ENCODE measurements at regions of chr15 and their contacts with region 1.

Region 1: GRCh38 chr15:39959411-39959810 is 25.5 kb downstream of the EIF2AK4 start:
- DNase-seq: no peak
- H3K4me3 ChIP-seq: no peak overlapping the region
- H3K27ac ChIP-seq: no peak overlapping the region
- H3K4me1 ChIP-seq: no peaks in the 10 kb centered on the region
- H3K27me3 ChIP-seq: no peaks in the 10 kb centered on the region
- CTCF ChIP-seq: no peak

Region 2: GRCh38 chr15:39908186-39908585 is 51.2 kb before region 1 on chr15:
- CTCF ChIA-PET with region 1: no interaction called
- POLR2A ChIA-PET with region 1: no interaction called
- intact Hi-C with region 1: no loop called
- DNase-seq: peak in 1 of 2 experiments; percentile 57
- H3K4me3 ChIP-seq: no peak overlapping the region
- H3K27ac ChIP-seq: no peak overlapping the region
- H3K4me1 ChIP-seq: peaks cover 9% of the 10 kb centered on the region
- H3K27me3 ChIP-seq: no peaks in the 10 kb centered on the region
- CTCF ChIP-seq: no peak

Region 3: GRCh38 chr15:39974656-39975230 is 15.3 kb after region 1 on chr15:
- CTCF ChIA-PET with region 1: interaction called, 24 read pairs
- POLR2A ChIA-PET with region 1: no interaction called
- intact Hi-C with region 1: no loop called
- DNase-seq: no peak
- H3K4me3 ChIP-seq: no peak overlapping the region
- H3K27ac ChIP-seq: no peak overlapping the region
- H3K4me1 ChIP-seq: peaks cover 8% of the 10 kb centered on the region; the same call in 1 of the 2 replicates
- H3K27me3 ChIP-seq: no peaks in the 10 kb centered on the region
- CTCF ChIP-seq: no peak

Region 4: GRCh38 chr15:40108855-40109735 is 149.7 kb after region 1 on chr15 and contains the start of gene BMF:
- CTCF ChIA-PET with region 1: no interaction called
- POLR2A ChIA-PET with region 1: no interaction called
- intact Hi-C with region 1: no loop called
- DNase-seq: peak; percentile 89 to 97
- H3K4me3 ChIP-seq: peak within 1 kb of the TSS; percentile 66
- H3K27ac ChIP-seq: no peak within 1 kb of the TSS; the same call in 1 of the 2 replicates
- H3K4me1 ChIP-seq: peaks cover 41% of the 10 kb centered on the region
- H3K27me3 ChIP-seq: no peaks in the 10 kb centered on the region
- CTCF ChIP-seq: peak; percentile 58; the same call in 1 of the 2 replicates
- total RNA-seq, gene BMF: 8.2 and 11.0 TPM in 2 replicates

Measured in PC-9 (cell line).